Dendritic cell treated with granulocyte-macrophage colony-stimulating factor and Interleukin-4, amounts not matched to agents 40 ng/mL and 50 ng/mL, for 4 days (primary cell): ENCODE measurements at regions of chr4 and their contacts with region 1.

Region 1: DNA sequence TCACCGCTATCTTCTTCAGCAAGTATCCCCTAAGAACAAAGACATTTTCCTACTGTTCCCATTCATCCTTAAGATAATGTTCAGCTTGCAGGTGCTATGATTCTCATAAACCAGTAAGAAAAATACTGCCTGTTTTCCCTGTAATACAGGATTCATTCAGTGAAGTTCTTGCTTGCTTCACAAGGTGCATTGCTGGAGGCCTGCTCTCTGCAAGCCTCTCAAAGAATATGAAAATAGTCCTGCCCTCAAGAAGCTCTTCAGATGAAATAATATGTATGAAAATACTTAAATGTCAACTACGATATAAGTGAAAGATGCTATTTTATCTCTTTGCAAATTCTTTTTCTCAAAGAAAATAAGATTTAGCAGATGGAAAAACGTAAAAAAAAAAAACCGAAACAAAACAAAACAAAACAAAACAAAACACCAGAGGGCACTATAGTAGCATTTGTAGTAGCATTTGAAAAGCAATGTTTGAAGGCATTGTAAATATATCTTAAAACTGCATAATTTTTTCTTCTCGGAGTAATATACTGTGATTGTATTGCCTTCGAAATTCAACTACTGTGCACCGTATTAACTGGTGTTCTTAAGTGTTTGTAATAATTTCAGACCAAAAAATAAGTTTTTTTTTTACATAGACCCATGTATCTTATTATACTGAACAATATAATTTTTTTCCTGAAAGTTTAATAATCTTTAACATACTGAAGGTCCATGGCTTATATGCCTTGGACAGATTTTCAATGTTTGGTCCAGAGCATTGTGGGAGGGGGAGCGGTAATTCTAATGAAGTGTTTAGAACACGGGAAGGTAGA is 26.0 kb downstream of the ADH4 start:
- H3K4me3 Mint-ChIP-seq: no peak overlapping the region
- H3K27ac Mint-ChIP-seq: no peak overlapping the region
- H3K4me1 Mint-ChIP-seq: no peaks in the 10 kb centered on the region
- H3K27me3 Mint-ChIP-seq: no peaks in the 10 kb centered on the region

Region 2: DNA sequence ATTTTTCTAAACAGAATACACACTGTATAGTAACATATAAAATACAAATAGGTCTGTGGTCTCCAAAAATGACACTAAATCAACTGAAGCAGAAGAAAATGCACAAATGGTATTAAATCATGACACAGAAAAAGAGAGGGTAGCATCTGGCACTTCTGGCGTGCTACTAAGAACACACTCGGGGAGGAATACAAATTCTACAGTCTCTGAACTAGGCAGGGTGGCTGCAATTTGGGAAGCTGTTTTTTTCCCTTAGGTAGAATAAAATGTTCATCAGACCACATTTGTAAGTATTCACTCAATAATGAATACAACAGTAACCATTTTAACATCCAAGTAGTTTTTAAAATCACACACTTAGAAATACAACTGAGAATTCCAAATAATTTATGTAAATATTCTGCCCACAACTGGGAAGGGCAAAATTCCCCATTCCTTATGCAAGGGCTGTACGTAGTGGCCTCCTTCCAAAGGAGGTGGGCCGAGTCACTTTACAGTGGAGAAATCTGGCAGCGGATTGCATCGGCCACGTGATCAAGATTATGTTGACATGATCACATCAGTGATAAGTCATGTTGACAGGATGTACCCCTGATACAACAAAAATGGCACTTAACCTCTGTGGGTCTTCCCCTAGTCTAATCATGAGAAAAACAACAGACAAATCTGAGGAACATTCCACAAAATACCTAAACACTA is 560.7 kb before region 1 on chr4:
- intact Hi-C with region 1: no loop called
- H3K4me3 Mint-ChIP-seq: no peak overlapping the region
- H3K27ac Mint-ChIP-seq: no peak overlapping the region
- H3K4me1 Mint-ChIP-seq: no peaks in the 10 kb centered on the region
- H3K27me3 Mint-ChIP-seq: no peaks in the 10 kb centered on the region

Region 3: GRCh38 chr4:99405433-99406115 is 287.5 kb after region 1 on chr4:
- intact Hi-C with region 1: loop called (anchors 2 kb)
- H3K4me3 Mint-ChIP-seq: no peak overlapping the region
- H3K27ac Mint-ChIP-seq: no peak overlapping the region
- H3K4me1 Mint-ChIP-seq: peaks cover 14% of the 10 kb centered on the region
- H3K27me3 Mint-ChIP-seq: no peaks in the 10 kb centered on the region

Region 4: GRCh38 chr4:99462875-99463464 is 344.9 kb after region 1 on chr4:
- intact Hi-C with region 1: loop called (anchors 2 kb)
- H3K4me3 Mint-ChIP-seq: no peak overlapping the region
- H3K27ac Mint-ChIP-seq: no peak overlapping the region
- H3K4me1 Mint-ChIP-seq: peaks cover 9% of the 10 kb centered on the region
- H3K27me3 Mint-ChIP-seq: peaks cover 5% of the 10 kb centered on the region

Region 5: GRCh38 chr4:99808260-99808857 is 690.3 kb after region 1 on chr4:
- intact Hi-C with region 1: loop called (anchors 10 kb)
- H3K4me3 Mint-ChIP-seq: no peak overlapping the region
- H3K27ac Mint-ChIP-seq: no peak overlapping the region
- H3K4me1 Mint-ChIP-seq: peaks cover 10% of the 10 kb centered on the region
- H3K27me3 Mint-ChIP-seq: no peaks in the 10 kb centered on the region